Aorta (tissue), 5 donors: ENCODE measurements at regions of chr3 and their contacts with region 1.

Region 1: DNA sequence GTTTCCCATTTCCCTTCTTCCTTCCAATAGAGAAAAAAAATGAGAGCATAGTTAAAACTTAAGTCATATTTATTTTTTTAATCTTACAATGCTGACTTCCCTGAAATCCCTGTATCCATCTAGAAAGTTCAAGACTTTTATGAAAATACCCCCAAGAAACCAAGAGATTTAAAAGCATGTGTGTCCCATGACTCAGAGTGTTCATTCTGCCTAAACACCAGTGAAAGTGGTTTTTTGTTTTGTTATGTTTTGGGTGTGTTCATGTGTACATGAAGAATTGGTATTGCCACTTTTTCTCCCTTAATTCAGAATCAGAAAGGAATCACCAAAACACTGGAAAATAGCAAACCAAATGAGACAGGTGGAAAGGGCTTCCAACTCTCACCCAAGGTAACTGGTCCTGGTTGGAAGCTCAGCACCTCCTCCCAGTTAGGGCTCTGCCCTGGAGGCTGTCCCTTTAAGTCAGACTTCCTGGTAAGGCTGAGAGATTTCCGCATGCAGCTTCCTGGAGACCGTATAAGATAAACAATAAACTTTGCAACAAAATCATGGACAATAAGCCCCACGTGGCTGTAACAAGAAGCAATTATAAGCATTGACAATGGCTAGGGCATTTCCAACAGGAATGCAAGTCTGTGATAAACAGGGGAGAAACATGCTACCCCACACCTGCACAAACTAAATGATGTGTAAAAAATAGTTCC is 121.9 kb upstream of the ARHGEF3 start:
- DNase-seq: no peak
- ATAC-seq: peak; percentile 60
- H3K4me3 ChIP-seq: no peak overlapping the region
- H3K27ac ChIP-seq: no peak overlapping the region
- H3K4me1 ChIP-seq: no peaks in the 10 kb centered on the region
- H3K27me3 ChIP-seq: no peaks in the 10 kb centered on the region

Region 2: GRCh38 chr3:56980798-56981390 is 57.2 kb after region 1 on chr3:
- intact Hi-C with region 1: loop called in 1 of 2 experiments (anchors 5 kb)
- DNase-seq: peak in 1 of 2 donors; percentile 79
- ATAC-seq: peak; percentile 78
- H3K4me3 ChIP-seq: no peak overlapping the region
- H3K27ac ChIP-seq: no peak overlapping the region
- H3K4me1 ChIP-seq: no peaks in the 10 kb centered on the region
- H3K27me3 ChIP-seq: no peaks in the 10 kb centered on the region

Region 3: GRCh38 chr3:57169872-57170623 is 246.4 kb after region 1 on chr3:
- intact Hi-C with region 1: no loop called
- DNase-seq: peak; percentile 79 to 92
- ATAC-seq: peak; percentile 87
- H3K4me3 ChIP-seq: peak overlapping the region in 1 of 2 donors; percentile 24
- H3K27ac ChIP-seq: no peak overlapping the region
- H3K4me1 ChIP-seq: no peaks in the 10 kb centered on the region
- H3K27me3 ChIP-seq: no peaks in the 10 kb centered on the region

Region 4: DNA sequence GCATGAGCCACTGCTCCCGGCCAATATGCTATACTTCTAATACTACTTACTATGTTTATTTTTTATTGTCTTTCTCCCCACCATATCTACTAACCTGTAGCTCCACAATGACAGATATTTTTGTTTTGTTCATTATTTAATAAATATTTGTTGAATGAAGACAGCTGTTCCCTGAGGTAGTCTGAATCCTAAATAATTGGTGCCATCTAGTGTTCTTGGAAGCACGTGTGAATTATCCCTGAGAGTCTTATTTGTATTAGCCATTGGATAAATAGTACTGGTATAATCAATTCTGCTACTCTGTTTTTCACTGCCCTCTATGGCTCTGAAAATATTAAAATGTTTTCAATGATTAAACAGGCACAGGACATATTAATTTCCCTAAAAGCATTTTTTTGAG is 298.2 kb after region 1 on chr3:
- intact Hi-C with region 1: no loop called
- DNase-seq: no peak
- ATAC-seq: no peak
- H3K4me3 ChIP-seq: no peak overlapping the region
- H3K27ac ChIP-seq: no peak overlapping the region
- H3K4me1 ChIP-seq: no peaks in the 10 kb centered on the region
- H3K27me3 ChIP-seq: no peaks in the 10 kb centered on the region